ENCODE measurements at regions of chr9 and their contacts with region 1.

Region 1: GRCh38 chr9:120985810-120986222 is 59.2 kb upstream of the TRAF1 start:
- DNase-seq: no peak
- H3K4me3 ChIP-seq: no peak overlapping the region
- H3K27ac ChIP-seq: no peak overlapping the region
- H3K4me1 ChIP-seq: no peaks in the 10 kb centered on the region
- H3K27me3 ChIP-seq: no peaks in the 10 kb centered on the region
- CTCF ChIP-seq: peak; percentile 21 to 62 (median 46)

Region 2: GRCh38 chr9:120755827-120756434 is 229.9 kb before region 1 on chr9:
- intact Hi-C with region 1: loop called (anchors 10 kb)
- DNase-seq: peak in 1 of 2 donors; percentile 76
- H3K4me3 ChIP-seq: no peak overlapping the region
- H3K27ac ChIP-seq: peak overlapping the region in 1 of 2 donors; percentile 44
- H3K4me1 ChIP-seq: peaks cover 0 to 2% of the 10 kb centered on the region in 2 donors
- H3K27me3 ChIP-seq: no peaks in the 10 kb centered on the region
- CTCF ChIP-seq: peak; percentile 82 to 86 (median 86)

Region 3: DNA sequence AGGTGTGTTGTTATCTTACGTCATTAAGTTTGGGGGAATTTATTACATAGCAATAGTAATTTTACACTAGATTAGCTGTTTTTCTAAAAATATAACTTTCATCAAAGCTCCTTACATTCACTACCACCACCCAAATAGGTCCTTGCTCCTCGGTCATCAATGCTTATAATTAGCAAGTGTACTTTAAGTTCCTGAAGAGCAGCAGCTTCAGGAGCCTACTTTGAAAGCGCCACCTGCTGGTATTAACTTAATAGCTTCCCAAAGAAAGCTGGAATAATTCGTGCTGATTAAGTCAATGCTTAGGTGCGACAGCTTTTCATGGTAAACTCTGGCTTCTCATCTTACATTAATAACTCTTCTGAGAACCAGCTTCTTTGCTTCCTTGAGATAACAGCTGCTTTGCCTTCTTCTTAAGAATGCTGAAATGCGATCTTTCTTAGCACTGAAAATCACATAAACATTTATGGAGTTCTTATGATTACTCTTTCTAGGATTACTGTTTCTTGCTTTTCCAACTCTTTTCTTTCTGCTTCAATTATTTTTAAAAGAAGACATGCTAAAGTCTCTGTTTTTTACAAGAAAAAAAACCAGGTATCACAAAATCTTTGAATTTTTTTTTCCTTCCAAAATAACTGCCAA is 74.3 kb after region 1 on chr9:
- intact Hi-C with region 1: loop called (anchors 1 kb)
- DNase-seq: no peak
- H3K4me3 ChIP-seq: no peak overlapping the region
- H3K27ac ChIP-seq: no peak overlapping the region
- H3K4me1 ChIP-seq: no peaks in the 10 kb centered on the region
- H3K27me3 ChIP-seq: no peaks in the 10 kb centered on the region
- CTCF ChIP-seq: peak; percentile 54 to 75 (median 73)

Region 4: GRCh38 chr9:121399883-121400607 is 414.2 kb after region 1 on chr9:
- intact Hi-C with region 1: loop called (anchors 10 kb)
- DNase-seq: no peak
- H3K4me3 ChIP-seq: no peak overlapping the region
- H3K27ac ChIP-seq: no peak overlapping the region
- H3K4me1 ChIP-seq: no peaks in the 10 kb centered on the region
- H3K27me3 ChIP-seq: no peaks in the 10 kb centered on the region
- CTCF ChIP-seq: peak; percentile 48 to 60 (median 59)